CD4-positive, alpha-beta memory T cell (primary cell): ENCODE measurements at regions of chr12 and their contacts with region 1.

Region 1: GRCh38 chr12:122336015-122336946 is 70.0 kb upstream of the VPS33A start:
- DNase-seq: peak in 4 of 5 donors; percentile 20 to 36 (median 25)
- H3K4me3 ChIP-seq: no peak overlapping the region
- H3K4me3 Mint-ChIP-seq: peak overlapping the region in 1 of 8 donors; percentile 17
- H3K27ac ChIP-seq: no peak overlapping the region
- H3K27ac Mint-ChIP-seq: peak overlapping the region in 5 of 7 donors; percentile 25 to 79 (median 63)
- H3K4me1 ChIP-seq: peaks cover 5% of the 10 kb centered on the region
- H3K4me1 Mint-ChIP-seq: peaks cover 2 to 11% (median 6%) of the 10 kb centered on the region in 4 donors
- H3K27me3 ChIP-seq: no peaks in the 10 kb centered on the region
- H3K27me3 Mint-ChIP-seq: no peaks in the 10 kb centered on the region

Region 2: GRCh38 chr12:122137681-122138080 is 198.6 kb before region 1 on chr12:
- CTCF ChIA-PET with region 1: no interaction called
- POLR2A ChIA-PET with region 1: no interaction called
- intact Hi-C with region 1: no loop called
- DNase-seq: no peak
- H3K4me3 ChIP-seq: no peak overlapping the region
- H3K4me3 Mint-ChIP-seq: no peak overlapping the region
- H3K27ac ChIP-seq: no peak overlapping the region
- H3K27ac Mint-ChIP-seq: no peak overlapping the region
- H3K4me1 ChIP-seq: no peaks in the 10 kb centered on the region
- H3K4me1 Mint-ChIP-seq: no peaks in the 10 kb centered on the region
- H3K27me3 ChIP-seq: no peaks in the 10 kb centered on the region
- H3K27me3 Mint-ChIP-seq: no peaks in the 10 kb centered on the region

Region 3: GRCh38 chr12:122293081-122293480 is 43.2 kb before region 1 on chr12:
- CTCF ChIA-PET with region 1: no interaction called
- POLR2A ChIA-PET with region 1: no interaction called
- intact Hi-C with region 1: no loop called
- DNase-seq: no peak
- H3K4me3 ChIP-seq: no peak overlapping the region
- H3K4me3 Mint-ChIP-seq: no peak overlapping the region
- H3K27ac ChIP-seq: no peak overlapping the region
- H3K27ac Mint-ChIP-seq: peak overlapping the region in 1 of 7 donors; percentile 68
- H3K4me1 ChIP-seq: no peaks in the 10 kb centered on the region
- H3K4me1 Mint-ChIP-seq: peaks cover 0 to 2% (median under 1%) of the 10 kb centered on the region in 4 donors
- H3K27me3 ChIP-seq: no peaks in the 10 kb centered on the region
- H3K27me3 Mint-ChIP-seq: no peaks in the 10 kb centered on the region

Region 4: GRCh38 chr12:122322501-122322900 is 13.8 kb before region 1 on chr12:
- CTCF ChIA-PET with region 1: interaction called, 13 read pairs
- POLR2A ChIA-PET with region 1: interaction called, 3 read pairs
- intact Hi-C with region 1: no loop called
- DNase-seq: no peak
- H3K4me3 ChIP-seq: no peak overlapping the region
- H3K4me3 Mint-ChIP-seq: no peak overlapping the region
- H3K27ac ChIP-seq: no peak overlapping the region
- H3K27ac Mint-ChIP-seq: no peak overlapping the region
- H3K4me1 ChIP-seq: peaks cover 19% of the 10 kb centered on the region
- H3K4me1 Mint-ChIP-seq: peaks cover 12 to 16% (median 14%) of the 10 kb centered on the region in 4 donors
- H3K27me3 ChIP-seq: no peaks in the 10 kb centered on the region
- H3K27me3 Mint-ChIP-seq: no peaks in the 10 kb centered on the region

Region 5: DNA sequence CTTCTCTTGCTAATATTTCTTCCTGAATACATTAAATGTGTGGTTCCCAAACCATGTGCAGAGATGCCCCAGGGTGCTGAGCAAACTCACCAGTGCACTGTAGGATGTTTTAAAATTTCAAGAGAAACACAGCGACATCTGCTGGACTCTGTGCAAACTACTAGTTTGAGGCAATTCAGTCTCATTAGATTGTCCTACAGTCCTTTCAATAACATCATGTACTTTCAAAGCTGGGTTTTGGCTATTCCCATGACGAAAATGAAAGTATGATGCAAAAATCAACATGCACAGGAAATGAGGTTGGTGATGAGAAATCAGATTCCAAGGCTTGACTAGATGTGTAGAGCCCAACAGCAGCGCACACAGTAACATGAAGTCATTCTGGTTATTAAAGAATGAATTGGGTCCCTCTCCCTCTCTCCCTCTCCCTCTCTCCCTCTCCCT is 19.9 kb after region 1 on chr12:
- CTCF ChIA-PET with region 1: interaction called, 24 read pairs
- POLR2A ChIA-PET with region 1: interaction called, 4 read pairs
- intact Hi-C with region 1: no loop called
- DNase-seq: peak in 4 of 5 donors; percentile 38 to 54 (median 44)
- H3K4me3 ChIP-seq: no peak overlapping the region
- H3K4me3 Mint-ChIP-seq: no peak overlapping the region
- H3K27ac ChIP-seq: no peak overlapping the region
- H3K27ac Mint-ChIP-seq: peak overlapping the region in 4 of 7 donors; percentile 5 to 87 (median 36)
- H3K4me1 ChIP-seq: no peaks in the 10 kb centered on the region
- H3K4me1 Mint-ChIP-seq: peaks cover 0 to 6% (median 3%) of the 10 kb centered on the region in 4 donors
- H3K27me3 ChIP-seq: no peaks in the 10 kb centered on the region
- H3K27me3 Mint-ChIP-seq: no peaks in the 10 kb centered on the region

Region 6: DNA sequence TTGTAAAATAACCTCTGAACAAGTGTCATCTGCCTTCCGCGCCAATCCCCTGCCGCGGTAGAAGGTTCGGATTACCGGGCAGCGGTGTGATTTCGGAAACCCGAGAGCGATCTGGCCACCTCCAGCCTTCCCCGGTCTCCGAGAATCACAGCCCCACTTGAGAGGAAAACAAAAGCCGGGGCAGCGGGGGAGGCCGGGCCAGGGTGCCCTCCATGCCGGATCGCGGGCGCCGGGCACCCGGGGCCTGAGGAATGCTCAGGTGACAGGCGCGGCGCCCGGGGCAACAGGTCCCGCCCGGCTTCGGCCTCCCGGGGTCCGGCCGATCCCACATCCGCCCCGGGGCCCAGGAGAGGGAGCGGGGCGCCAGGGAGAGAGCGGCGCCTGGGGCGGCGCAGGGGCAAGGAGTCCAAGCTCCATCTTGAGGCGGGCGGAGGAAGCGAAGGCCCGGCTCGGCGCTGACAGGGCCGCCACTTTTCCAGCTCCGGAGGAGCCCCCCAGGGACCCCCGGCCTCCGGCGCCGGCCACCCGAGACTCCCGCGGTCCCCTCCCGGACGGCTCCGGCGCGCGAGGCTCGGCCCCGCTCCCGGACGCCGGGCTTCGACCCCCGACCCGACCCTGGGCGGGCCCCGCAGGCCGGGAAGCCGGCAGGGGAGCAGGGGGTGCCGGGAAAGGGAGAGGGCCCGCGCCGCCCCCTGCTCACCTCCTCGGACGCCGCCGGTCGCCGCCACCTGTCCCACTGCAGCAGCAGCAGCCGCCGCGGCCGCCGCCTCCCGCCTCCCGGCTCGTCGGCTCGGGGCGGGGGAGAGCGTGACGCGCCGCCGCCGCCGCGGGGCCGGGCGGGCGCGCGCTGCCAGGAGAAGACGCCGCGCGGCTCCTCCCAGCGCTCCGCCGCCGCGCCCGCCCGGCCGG is 85.8 kb after region 1 on chr12 and contains the start of gene CLIP1:
- CTCF ChIA-PET with region 1: no interaction called
- POLR2A ChIA-PET with region 1: no interaction called
- intact Hi-C with region 1: no loop called
- DNase-seq: peak; percentile 50 to 71 (median 63)
- H3K4me3 ChIP-seq: peak within 1 kb of the TSS; percentile 67 to 80
- H3K4me3 Mint-ChIP-seq: peak within 1 kb of the TSS; percentile 89 to 96 (median 94)
- H3K27ac ChIP-seq: peak within 1 kb of the TSS; percentile 64
- H3K27ac Mint-ChIP-seq: peak within 1 kb of the TSS; percentile 87 to 97 (median 95)
- H3K4me1 ChIP-seq: peaks cover 45% of the 10 kb centered on the region
- H3K4me1 Mint-ChIP-seq: peaks cover 22 to 39% (median 31%) of the 10 kb centered on the region in 4 donors
- H3K27me3 ChIP-seq: no peaks in the 10 kb centered on the region
- H3K27me3 Mint-ChIP-seq: no peaks in the 10 kb centered on the region
- total RNA-seq, gene CLIP1: 63.5 to 65.7 TPM